Activated CD8-positive, alpha-beta T cell treated with anti-CD3 and anti-CD28 coated beads for 36 hours (primary cell): ENCODE measurements at regions of chr9 and their contacts with region 1.

Region 1: DNA sequence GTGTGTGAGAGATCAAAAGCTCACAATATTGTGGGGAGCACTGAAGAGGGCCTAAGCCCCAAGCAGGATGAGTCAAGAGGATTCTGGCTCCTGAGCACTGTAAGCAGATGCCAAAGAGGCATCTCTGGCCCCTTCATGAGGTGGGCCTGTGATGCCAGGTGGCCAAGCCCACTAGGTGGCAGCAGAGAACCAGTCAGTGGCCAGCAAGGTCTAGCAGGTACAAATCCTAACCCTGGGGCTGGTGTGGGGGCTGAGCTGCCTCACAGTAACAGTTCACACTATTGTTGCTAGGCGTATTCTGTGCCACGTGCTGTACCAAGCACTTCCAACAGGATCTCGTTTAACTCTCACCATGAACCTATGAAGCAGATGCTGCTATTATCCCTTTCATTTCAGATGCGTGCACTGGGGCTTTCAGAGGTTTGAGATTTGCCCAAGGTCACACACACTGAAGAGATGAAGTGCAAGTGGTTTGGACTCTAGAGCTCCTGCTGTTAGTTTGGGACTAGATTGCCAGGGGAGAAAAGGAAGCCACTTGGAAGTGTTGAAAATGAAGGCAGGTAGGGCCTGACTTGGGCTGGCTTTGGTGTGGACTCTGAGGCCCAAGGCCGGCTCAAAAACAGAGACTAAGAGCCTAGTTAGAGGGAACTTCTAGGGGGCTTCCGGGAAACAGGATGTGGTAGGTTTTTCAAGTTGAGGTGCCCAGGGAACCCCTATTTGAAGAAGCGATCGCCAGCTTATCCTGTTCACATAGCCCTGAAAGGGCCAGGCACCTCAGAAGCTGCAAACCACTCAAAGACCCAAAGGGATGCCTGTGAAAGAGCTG is 4.4 kb upstream of the MLANA start:
- DNase-seq: peak; percentile 93
- ATAC-seq: peak; percentile 99
- H3K4me3 Mint-ChIP-seq: no peak overlapping the region
- H3K27ac Mint-ChIP-seq: no peak overlapping the region
- H3K4me1 Mint-ChIP-seq: peaks cover 8% of the 10 kb centered on the region
- H3K27me3 Mint-ChIP-seq: no peaks in the 10 kb centered on the region
- CTCF ChIP-seq: peak; percentile 93

Region 2: DNA sequence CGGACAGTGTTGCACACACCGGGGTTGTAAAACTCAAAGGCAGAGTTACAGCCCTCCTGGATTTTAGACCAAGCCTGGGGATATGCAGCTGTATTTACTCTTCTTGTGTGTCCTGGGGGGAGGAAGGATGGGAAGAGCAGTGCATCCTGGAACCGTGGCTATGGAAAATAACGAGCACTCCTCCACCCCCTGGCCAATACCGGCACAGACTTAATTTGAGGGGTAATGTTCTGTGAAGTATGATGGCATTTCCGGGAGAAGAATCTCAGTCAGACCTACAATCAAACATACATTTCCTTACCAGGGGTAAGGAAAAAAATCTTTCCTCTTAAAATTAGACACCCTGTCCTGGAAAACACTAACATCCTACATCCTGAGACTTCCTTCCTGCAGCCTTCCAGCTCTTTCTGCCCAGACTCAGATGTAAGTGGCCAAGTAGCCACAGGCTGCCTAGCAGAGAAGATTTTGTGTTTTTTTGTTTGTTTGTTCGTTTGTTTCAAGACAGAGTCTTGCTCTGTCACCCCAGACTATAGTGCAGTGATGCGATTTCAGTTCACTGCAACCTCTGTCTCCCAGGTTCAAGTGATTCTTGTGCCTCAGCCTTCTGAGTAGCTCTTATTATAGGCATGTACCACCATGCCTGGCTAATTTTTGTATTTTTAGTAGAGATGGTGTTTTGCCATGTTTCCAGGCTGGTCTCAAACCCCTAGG is 42.4 kb before region 1 on chr9:
- CTCF ChIA-PET with region 1: interaction called, 10 read pairs
- POLR2A ChIA-PET with region 1: interaction called, 3 read pairs
- intact Hi-C with region 1: no loop called
- DNase-seq: peak; percentile 16
- ATAC-seq: no peak
- H3K4me3 Mint-ChIP-seq: peak overlapping the region; percentile 51
- H3K27ac Mint-ChIP-seq: peak overlapping the region; percentile 89
- H3K4me1 Mint-ChIP-seq: peaks cover 65% of the 10 kb centered on the region
- H3K27me3 Mint-ChIP-seq: no peaks in the 10 kb centered on the region
- CTCF ChIP-seq: no peak

Region 3: DNA sequence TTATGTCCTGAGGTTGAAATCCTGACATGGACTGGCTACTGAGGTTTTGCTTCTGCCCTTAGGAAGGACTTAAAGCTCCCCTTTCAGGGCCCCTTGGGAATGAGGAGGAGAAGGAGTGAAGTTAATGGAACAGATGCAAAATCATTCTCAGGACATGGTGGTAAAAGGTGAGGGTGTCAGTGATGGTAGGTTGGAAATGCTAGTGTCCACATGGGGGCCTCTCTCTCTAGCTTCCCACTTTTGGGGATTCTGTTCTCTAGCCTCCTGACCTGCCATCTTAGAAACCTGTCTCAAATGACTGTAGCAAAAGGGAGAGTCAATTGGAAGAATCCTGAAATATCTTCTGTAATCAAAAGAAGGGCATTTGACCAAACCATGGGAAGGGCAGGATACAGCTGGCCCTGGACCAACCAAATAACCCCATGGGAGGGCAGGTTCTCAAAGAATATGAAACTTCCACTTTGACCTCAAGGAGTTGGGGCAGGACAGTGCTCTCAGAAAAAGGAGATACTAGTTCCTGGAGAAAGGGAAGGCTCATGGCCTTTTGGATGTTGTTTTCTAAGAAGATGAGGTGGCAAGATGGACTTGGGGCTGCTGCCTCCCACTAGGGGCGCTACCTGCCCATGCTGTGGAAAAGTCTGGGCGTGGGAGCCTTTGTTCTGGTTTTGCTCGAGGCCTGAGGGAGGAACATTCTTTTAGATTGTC is 16.9 kb before region 1 on chr9:
- CTCF ChIA-PET with region 1: interaction called, 26 read pairs
- POLR2A ChIA-PET with region 1: no interaction called
- intact Hi-C with region 1: no loop called
- DNase-seq: peak; percentile 49
- ATAC-seq: peak; percentile 71
- H3K4me3 Mint-ChIP-seq: no peak overlapping the region
- H3K27ac Mint-ChIP-seq: peak overlapping the region; percentile 52
- H3K4me1 Mint-ChIP-seq: peaks cover 19% of the 10 kb centered on the region
- H3K27me3 Mint-ChIP-seq: no peaks in the 10 kb centered on the region
- CTCF ChIP-seq: peak; percentile 32

Region 4: GRCh38 chr9:5931657-5932056 is 45.3 kb after region 1 on chr9:
- CTCF ChIA-PET with region 1: no interaction called
- POLR2A ChIA-PET with region 1: no interaction called
- intact Hi-C with region 1: no loop called
- DNase-seq: no peak
- ATAC-seq: no peak
- H3K4me3 Mint-ChIP-seq: no peak overlapping the region
- H3K27ac Mint-ChIP-seq: no peak overlapping the region
- H3K4me1 Mint-ChIP-seq: no peaks in the 10 kb centered on the region
- H3K27me3 Mint-ChIP-seq: no peaks in the 10 kb centered on the region
- CTCF ChIP-seq: no peak

Region 5: DNA sequence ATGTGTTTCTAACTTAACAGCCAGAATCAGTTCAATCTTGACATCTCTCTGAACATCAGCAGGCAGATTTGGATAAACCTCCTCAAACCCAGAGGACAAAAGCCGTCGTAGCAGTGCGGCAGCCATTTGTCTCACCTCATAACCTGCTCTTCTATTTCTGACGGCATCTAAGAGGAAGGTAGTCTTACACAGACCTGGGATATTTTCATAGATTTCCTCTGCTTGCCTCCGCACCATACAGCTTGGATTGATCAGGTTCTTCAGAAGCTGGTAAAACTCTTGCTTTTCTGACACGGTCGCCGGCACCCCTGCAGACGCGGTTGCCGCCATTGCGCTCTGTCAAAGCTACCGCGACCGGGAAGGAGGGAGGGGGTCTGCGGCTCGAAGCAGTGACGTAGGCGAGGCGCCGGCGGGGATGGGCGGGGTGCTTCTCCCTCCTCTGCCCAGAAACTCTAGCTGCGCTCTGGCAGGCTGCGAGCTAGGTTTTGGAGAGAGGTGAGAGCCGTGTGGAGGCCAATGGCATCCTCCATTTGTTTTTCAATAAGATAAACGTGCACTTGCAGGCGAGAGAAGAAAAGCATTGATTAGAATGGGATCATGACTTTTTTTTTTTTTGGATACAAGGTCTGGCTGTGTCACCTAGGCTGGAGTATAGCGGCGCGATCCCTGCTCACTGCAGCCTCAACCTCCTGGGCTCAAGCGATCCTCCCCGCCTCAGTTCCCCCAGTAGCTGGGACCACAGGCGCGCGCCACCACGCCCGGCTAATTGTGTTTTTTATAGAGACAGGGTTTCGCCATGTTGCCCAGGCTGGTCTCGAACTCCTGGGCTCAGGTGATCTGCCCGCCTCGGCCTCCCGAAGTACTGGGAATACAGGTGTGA is 129.2 kb after region 1 on chr9 and contains the start of gene RANBP6:
- CTCF ChIA-PET with region 1: interaction called, 12 read pairs
- POLR2A ChIA-PET with region 1: no interaction called
- intact Hi-C with region 1: no loop called
- DNase-seq: peak; percentile 95
- ATAC-seq: peak; percentile 97
- H3K4me3 Mint-ChIP-seq: peak within 1 kb of the TSS; percentile 95
- H3K27ac Mint-ChIP-seq: peak within 1 kb of the TSS; percentile 97
- H3K4me1 Mint-ChIP-seq: peaks cover 34% of the 10 kb centered on the region
- H3K27me3 Mint-ChIP-seq: no peaks in the 10 kb centered on the region
- CTCF ChIP-seq: no peak
- total RNA-seq, gene RANBP6: 16.2 to 17.1 TPM

Region 6: GRCh38 chr9:6029604-6030274 is 143.4 kb after region 1 on chr9:
- CTCF ChIA-PET with region 1: interaction called, 13 read pairs
- POLR2A ChIA-PET with region 1: no interaction called
- intact Hi-C with region 1: no loop called
- DNase-seq: no peak
- ATAC-seq: no peak
- H3K4me3 Mint-ChIP-seq: no peak overlapping the region
- H3K27ac Mint-ChIP-seq: no peak overlapping the region
- H3K4me1 Mint-ChIP-seq: no peaks in the 10 kb centered on the region
- H3K27me3 Mint-ChIP-seq: peaks cover 5% of the 10 kb centered on the region
- CTCF ChIP-seq: no peak

Region 7: DNA sequence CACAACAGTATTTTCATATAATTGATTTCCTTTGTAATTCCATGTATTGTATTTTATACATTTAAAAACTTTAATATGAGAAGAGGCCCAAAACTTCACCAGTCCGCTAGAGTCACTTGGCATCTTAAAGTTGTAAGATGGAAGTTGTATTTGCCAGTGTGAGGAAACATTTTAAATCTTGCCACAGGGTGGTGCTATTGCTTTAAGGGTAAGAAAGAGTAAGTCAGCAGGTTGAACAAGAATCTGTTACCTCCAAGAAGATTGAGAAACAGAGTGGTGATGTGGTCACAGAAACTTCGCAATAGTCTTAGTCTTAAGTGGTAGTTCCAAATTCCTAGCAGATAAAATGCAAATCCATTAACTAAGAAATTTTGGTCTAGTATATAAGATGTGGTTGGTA is 168.9 kb after region 1 on chr9:
- CTCF ChIA-PET with region 1: interaction called, 49 read pairs
- POLR2A ChIA-PET with region 1: interaction called, 4 read pairs
- intact Hi-C with region 1: loop called (anchors 1 kb)
- DNase-seq: peak; percentile 58
- ATAC-seq: peak; percentile 67
- H3K4me3 Mint-ChIP-seq: no peak overlapping the region
- H3K27ac Mint-ChIP-seq: no peak overlapping the region
- H3K4me1 Mint-ChIP-seq: peaks cover 3% of the 10 kb centered on the region
- H3K27me3 Mint-ChIP-seq: peaks cover 2% of the 10 kb centered on the region
- CTCF ChIP-seq: peak; percentile 60